ENCODE measurements at regions of chr19 and their contacts with region 1.

Region 1: GRCh38 chr19:4014541-4015491 is 7.3 kb downstream of the PIAS4 start:
- DNase-seq: peak; percentile 70
- ATAC-seq: peak; percentile 48 to 89 (median 80)
- H3K4me3 ChIP-seq: peak overlapping the region in 9 of 10 donors; percentile 2 to 43 (median 30)
- H3K27ac ChIP-seq: peak overlapping the region; percentile 26 to 87 (median 75)
- H3K4me1 ChIP-seq: peaks cover 24 to 71% (median 60%) of the 10 kb centered on the region in 9 donors
- H3K27me3 ChIP-seq: no peaks in the 10 kb centered on the region
- CTCF ChIP-seq: no peak

Region 2: DNA sequence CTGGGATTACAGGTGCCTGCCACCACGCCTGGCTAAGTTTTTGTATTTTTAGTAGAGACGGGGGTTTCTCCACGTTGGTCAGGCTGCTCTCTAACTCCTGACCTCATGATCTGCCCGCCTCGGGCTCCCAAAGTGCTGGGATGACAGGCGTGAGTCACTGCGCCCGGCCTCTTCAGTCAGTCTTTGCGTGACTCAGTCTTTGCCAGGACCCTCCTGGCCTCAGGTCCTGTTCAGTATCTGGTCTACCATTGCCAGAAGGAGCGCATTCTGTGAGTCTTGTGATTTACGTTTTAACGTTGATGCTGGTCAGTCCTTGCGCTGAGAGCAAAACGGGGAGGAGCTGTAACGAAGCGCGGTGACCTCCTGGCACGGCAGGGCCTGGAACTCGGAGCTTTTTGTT is 449.7 kb before region 1 on chr19:
- intact Hi-C with region 1: no loop called
- DNase-seq: no peak
- ATAC-seq: no peak
- H3K4me3 ChIP-seq: no peak overlapping the region
- H3K27ac ChIP-seq: no peak overlapping the region
- H3K4me1 ChIP-seq: no peaks in the 10 kb centered on the region
- H3K27me3 ChIP-seq: no peaks in the 10 kb centered on the region
- CTCF ChIP-seq: no peak

Region 3: GRCh38 chr19:3995627-3996026 is 19.2 kb before region 1 on chr19:
- intact Hi-C with region 1: no loop called
- DNase-seq: no peak
- ATAC-seq: no peak
- H3K4me3 ChIP-seq: no peak overlapping the region
- H3K27ac ChIP-seq: no peak overlapping the region
- H3K4me1 ChIP-seq: no peaks in the 10 kb centered on the region
- H3K27me3 ChIP-seq: no peaks in the 10 kb centered on the region
- CTCF ChIP-seq: no peak

Region 4: DNA sequence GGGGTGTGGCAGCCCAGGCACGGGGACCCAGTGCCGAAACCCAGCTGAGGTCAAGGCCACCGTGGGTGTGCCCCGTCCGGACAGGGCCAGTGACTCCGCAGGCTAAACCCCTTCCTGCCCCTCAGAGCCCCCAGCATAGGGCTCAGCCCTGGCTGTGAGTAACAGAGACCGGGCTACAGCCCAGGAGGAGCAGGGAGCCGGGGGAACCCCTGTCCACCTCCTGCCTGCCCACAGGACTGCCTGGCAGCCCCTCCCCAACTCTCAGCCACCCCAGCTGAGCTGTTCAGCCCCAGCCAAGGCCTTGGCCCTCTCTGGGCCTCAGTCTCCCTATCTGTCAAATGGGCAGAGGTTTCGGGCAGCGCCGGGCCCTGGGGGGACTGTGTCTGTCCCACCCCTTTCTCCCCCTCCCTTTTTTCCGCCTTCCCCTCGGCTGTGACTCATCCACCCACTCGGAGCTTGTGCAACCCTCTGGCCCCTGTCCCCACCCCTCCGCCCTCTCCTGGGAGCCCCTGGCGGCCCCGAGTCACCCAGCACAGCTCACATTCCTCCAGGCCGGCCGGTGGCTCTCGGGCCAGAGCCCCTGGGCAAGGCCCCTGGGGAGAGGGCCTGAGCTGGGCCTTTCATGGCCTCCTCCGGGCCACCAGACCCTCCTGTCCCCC is 43.3 kb after region 1 on chr19:
- intact Hi-C with region 1: loop called in 2 of 10 experiments (anchors 5 kb)
- DNase-seq: peak; percentile 87
- ATAC-seq: peak; percentile 66 to 73 (median 68)
- H3K4me3 ChIP-seq: peak overlapping the region in 9 of 10 donors; percentile 14 to 91 (median 44)
- H3K27ac ChIP-seq: peak overlapping the region; percentile 92 to 99 (median 98)
- H3K4me1 ChIP-seq: peaks cover 54 to 71% (median 62%) of the 10 kb centered on the region in 9 donors
- H3K27me3 ChIP-seq: no peaks in the 10 kb centered on the region
- CTCF ChIP-seq: peak in 4 of 9 donors; percentile 16 to 37 (median 28)

Region 5: DNA sequence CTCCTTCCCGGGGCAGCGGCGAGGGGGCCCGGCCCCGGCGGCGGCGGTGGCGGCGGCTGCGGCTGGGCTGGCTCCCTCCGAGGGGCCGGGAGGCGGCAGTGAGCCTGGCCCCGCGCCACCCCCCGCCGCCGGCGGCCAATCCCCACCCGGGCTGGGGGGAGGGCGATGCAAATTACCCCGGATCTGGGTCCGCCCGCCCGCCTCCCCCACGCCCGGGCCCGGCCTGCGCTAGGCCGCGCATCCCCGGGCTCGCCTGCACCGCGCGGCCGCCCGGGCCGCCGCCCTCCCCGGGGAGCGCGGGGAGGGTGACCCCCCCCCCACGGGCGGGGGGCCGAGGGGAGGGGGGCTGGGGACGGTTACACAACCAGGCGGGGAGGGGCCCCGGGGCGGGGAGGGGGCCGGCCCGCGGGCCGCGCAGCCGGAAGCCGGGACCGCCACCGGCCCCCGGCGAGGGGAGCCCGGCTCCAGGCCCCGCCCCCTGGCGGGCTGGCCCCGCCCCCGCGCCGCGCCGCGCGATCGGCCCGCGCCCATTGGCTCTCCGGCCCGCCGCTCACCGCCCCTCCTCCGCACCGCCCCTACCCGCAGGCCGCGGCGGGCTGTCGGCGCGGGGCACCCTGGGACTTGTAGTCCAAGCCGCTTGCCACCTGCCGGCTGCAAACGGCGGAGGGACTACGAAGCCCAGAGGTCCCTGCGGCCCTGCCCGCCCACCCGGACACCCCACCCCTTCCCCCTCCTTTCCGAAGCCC is 50.8 kb after region 1 on chr19:
- intact Hi-C with region 1: loop called in 1 of 10 experiments (anchors 5 kb)
- DNase-seq: peak; percentile 95 to 97
- ATAC-seq: peak; percentile 78 to 88 (median 84)
- H3K4me3 ChIP-seq: peak overlapping the region in 9 of 10 donors; percentile 79 to 99 (median 96)
- H3K27ac ChIP-seq: peak overlapping the region; percentile 98 to 100 (median 99)
- H3K4me1 ChIP-seq: peaks cover 33 to 62% (median 53%) of the 10 kb centered on the region in 9 donors
- H3K27me3 ChIP-seq: no peaks in the 10 kb centered on the region
- CTCF ChIP-seq: peak in 1 of 9 donors; percentile 20

Measured in heart right ventricle (tissue), 16 donors.